Mammary epithelial cell (primary cell): ENCODE measurements at regions of chr17 and their contacts with region 1.

Region 1: GRCh38 chr17:21058098-21058893 is 15.5 kb upstream of the USP22 start:
- DNase-seq: peak; percentile 9
- H3K4me3 ChIP-seq: no peak overlapping the region
- H3K27ac ChIP-seq: no peak overlapping the region
- H3K4me1 ChIP-seq: peaks cover 3% of the 10 kb centered on the region
- H3K27me3 ChIP-seq: no peaks in the 10 kb centered on the region
- CTCF ChIP-seq: peak; percentile 5 to 7

Region 2: DNA sequence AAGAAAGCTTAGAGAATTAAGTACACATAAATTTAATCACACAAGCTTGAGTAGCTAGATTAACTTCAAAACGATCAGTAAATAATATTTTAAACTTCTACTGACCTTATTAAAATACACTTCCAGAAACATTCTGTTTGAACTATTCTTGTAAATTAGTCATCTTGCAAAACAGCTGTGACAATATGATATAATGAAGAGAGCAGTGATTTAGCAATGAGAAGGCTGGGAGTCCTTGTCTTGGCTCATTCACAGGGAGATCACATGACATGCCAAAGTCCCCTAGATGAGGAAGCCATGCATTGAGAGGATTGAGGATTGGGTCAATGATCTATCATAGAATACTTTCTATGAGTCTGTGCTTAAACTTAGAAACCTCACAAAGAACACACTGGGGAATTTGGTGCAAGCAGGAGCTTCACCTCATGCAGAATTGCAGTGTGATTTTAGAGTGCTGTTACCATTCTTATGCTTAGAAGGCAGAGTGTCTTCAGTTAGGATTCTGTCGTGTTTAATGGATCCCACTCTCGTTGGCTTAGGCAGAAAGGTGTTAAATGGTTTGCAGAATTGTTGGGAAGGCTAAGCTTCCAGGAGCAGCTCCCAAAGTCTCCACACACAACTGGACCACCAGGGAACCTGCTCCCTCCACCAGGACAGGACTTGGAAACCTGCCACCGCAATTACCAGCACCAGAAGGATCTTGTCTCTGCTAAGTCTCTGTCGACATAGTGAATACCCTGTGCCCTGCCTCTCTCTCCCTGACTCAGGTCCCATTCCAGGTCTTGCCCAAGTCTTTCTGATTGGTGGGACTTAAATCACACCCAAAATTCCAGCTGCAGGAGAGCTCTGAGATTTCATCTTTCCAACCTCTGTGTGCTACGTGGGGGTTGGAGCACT is 102.6 kb before region 1 on chr17:
- CTCF ChIA-PET with region 1: no interaction called
- dilution Hi-C with region 1: no loop called
- in situ Hi-C with region 1: no loop called
- intact Hi-C with region 1: no loop called
- DNase-seq: peak; percentile 77
- H3K4me3 ChIP-seq: no peak overlapping the region
- H3K27ac ChIP-seq: no peak overlapping the region
- H3K4me1 ChIP-seq: peaks cover 7% of the 10 kb centered on the region
- H3K27me3 ChIP-seq: no peaks in the 10 kb centered on the region
- CTCF ChIP-seq: no peak

Region 3: DNA sequence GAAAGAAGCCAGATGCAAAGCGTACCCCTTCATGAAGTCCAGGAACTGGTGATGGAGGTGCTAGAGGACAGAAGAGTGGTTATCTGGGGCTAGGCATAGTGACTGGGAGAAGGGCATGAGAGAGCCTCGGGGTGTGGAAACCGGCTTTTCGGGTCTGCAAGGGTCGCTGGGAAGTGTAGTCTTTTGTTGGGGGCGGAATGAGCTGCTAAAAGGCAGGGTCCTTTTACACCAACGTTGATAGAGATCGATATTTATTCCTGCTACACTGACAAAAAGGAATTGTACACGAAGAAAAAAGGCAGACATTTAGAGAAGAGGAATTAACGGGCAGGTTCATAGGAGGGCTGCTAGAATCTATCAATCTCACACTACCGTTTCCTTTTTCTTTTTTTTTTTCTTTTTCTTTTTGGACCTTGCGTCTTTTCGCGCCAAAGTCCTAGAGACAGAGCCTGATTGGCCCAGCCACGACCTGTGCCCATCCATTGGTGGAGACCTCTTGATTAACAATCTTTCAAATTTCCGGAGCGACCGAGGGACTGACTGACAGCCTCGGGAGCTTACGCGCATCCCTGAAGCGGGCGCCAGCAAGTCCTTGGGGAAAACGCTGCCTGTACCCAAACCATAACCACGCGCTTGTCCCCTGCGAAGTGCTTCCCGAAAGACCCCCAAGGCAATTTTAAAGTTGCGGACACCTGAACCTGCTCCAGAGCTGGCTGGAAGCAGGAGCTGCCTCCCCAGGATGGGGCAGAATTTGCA is 40.8 kb after region 1 on chr17:
- CTCF ChIA-PET with region 1: interaction called, 3 read pairs
- dilution Hi-C with region 1: no loop called
- in situ Hi-C with region 1: no loop called
- intact Hi-C with region 1: loop called (anchors 5 kb)
- DNase-seq: peak; percentile 87
- H3K4me3 ChIP-seq: peak overlapping the region; percentile 53 to 65 (median 64)
- H3K27ac ChIP-seq: peak overlapping the region; percentile 84
- H3K4me1 ChIP-seq: no peaks in the 10 kb centered on the region
- H3K27me3 ChIP-seq: no peaks in the 10 kb centered on the region
- CTCF ChIP-seq: no peak